ENCODE measurements at regions of chr4 and their contacts with region 1.

Region 1: DNA sequence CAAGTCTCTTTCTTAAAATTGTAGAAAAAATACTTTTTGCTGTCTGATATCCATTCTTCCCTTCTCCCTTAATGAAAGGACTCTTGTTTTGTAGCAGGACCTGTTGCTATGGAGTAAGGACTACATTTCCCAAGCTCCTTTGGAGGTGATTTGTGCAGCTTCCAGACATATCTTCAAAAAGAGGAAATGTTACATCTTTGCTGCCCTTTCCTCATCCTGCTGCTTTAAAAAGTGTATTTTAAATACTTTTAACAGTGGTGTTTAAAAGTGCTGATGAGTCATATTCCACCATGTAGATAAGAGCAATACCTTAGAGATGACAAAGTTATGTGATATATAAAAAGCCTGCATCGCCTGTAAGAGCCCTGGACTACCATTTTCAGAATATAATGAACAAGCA is 98.7 kb downstream of the CFAP299 start:
- DNase-seq: no peak
- ATAC-seq: no peak
- H3K4me3 Mint-ChIP-seq: no peak overlapping the region
- H3K27ac Mint-ChIP-seq: no peak overlapping the region
- H3K4me1 Mint-ChIP-seq: no peaks in the 10 kb centered on the region
- H3K27me3 Mint-ChIP-seq: peaks cover 3% of the 10 kb centered on the region
- CTCF ChIP-seq: no peak

Region 2: DNA sequence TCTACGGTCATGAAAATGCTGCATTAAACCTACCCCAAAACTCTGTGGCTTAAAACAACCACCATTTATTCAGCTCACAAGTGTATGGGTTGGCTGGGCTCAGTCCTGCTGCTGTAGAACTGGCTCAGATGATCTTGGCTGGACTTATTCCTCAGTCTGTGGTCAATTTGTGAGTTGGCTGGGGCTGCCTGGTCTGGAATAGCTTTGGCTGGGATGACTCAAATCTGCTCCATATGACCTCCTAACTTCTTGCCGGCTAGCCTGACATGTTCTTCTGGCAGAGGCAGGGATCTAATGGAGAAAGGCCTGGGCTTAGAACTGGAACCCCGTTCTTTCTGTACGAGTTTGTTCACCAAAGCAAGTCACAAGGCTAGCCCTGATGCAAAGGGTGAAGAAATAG is 27.0 kb before region 1 on chr4:
- CTCF ChIA-PET with region 1: no interaction called
- POLR2A ChIA-PET with region 1: no interaction called
- intact Hi-C with region 1: loop called (anchors 1 kb)
- DNase-seq: no peak
- ATAC-seq: no peak
- H3K4me3 Mint-ChIP-seq: no peak overlapping the region
- H3K27ac Mint-ChIP-seq: no peak overlapping the region
- H3K4me1 Mint-ChIP-seq: no peaks in the 10 kb centered on the region
- H3K27me3 Mint-ChIP-seq: peaks cover 1% of the 10 kb centered on the region
- CTCF ChIP-seq: no peak

Region 3: GRCh38 chr4:82138374-82138773 is 1704.1 kb after region 1 on chr4:
- CTCF ChIA-PET with region 1: no interaction called
- POLR2A ChIA-PET with region 1: no interaction called
- intact Hi-C with region 1: no loop called
- DNase-seq: no peak
- ATAC-seq: no peak
- H3K4me3 Mint-ChIP-seq: no peak overlapping the region
- H3K27ac Mint-ChIP-seq: no peak overlapping the region
- H3K4me1 Mint-ChIP-seq: peaks cover 10% of the 10 kb centered on the region
- H3K27me3 Mint-ChIP-seq: peaks cover 1% of the 10 kb centered on the region
- CTCF ChIP-seq: no peak

Measured in activated B cell treated with CpG ODN at 0.5 μM for 24 hours (primary cell).